ENCODE measurements at regions of chr2 and their contacts with region 1.

Region 1: GRCh38 chr2:67397143-67397986 is at the start of gene ETAA1:
- DNase-seq: peak; percentile 58 to 95
- H3K4me3 ChIP-seq: peak within 1 kb of the TSS; percentile 73 to 89
- H3K27ac ChIP-seq: peak within 1 kb of the TSS; percentile 90
- H3K4me1 ChIP-seq: peaks cover 0 to 28% of the 10 kb centered on the region in 2 donors
- H3K27me3 ChIP-seq: no peaks in the 10 kb centered on the region
- CTCF ChIP-seq: no peak
- total RNA-seq, gene ETAA1: 5.4 TPM

Region 2: DNA sequence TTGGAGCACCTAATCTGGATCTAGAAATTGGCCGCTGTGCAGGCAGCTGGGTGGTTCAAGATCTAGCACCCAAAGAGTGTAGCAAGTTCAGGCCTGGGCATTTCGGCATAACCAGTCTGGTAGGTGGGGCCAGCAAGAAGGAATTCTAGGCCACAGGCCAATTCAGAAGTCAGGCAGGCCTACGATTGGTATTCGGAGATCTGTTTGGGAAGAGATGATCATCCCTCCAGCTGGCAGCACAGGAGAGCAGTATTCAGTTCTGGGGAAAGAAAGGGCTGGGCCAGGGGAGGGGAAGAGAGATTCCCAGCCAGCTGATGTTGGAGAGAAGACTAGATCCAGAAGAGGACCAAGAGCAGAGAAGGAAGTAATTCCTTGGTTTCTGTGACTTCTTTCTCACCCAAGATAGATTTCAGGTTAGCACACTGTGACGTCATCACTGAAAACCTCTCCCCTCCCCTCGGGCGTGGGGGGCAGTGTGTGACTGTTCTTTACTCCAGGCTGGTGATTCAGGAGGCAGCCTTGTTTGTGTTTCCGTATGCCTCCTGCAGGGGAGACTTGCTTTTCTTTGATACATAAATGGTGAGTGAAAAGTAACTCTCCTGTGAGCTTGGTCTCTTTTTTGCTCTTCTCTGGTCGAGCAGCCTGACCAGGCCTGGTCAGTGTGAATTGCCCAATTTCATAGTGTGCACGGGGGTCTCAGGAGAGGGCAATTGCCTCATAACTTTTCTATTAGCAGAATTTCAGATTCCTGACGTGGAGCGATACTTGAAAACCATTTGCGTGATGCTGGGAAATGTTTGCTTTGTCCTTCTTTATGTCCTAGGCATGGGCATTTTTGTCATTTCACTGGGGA is 901.4 kb before region 1 on chr2:
- intact Hi-C with region 1: loop called (anchors 2 kb)
- DNase-seq: peak; percentile 21 to 89
- H3K4me3 ChIP-seq: peak overlapping the region; percentile 18 to 23
- H3K27ac ChIP-seq: peak overlapping the region; percentile 68 to 70
- H3K4me1 ChIP-seq: peaks cover 11 to 34% of the 10 kb centered on the region in 2 donors
- H3K27me3 ChIP-seq: no peaks in the 10 kb centered on the region
- CTCF ChIP-seq: peak; percentile 26 to 40 (median 27)

Region 3: DNA sequence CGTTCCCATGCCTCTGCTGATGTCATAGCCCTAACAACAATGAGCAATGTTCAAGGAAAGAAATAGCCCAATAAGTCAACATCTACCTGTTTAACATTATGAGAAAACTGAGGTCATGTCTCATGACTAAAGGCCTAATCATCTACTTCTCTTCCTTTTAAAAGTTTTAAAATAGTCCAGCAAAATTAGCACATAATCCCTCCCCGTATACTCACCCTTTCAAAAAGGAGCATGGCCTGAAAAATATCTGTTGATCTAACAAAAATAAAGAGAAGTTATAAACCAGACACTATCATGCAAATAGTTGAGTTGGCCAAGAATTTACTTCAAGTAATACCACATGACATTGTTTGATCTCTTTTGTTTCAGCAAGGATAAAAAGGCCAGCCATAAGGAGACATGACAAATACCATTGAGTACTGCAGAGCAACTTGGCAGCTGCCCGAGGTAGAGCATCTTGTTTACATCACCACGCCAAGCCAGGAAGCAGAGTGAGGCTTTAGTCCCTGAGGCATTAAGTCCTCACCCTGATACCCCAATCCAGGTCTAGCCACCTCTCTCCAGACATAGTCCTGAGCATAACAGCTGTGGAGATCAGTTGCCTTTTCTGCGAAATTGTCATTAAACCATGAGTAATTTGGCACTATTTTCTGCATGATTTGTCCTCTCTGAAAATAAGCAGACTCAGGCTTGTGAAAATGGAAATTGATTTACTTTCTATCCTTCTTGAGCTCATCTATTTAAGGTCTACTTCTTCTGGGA is 137.6 kb before region 1 on chr2:
- intact Hi-C with region 1: loop called (anchors 5 kb)
- DNase-seq: peak in 1 of 2 donors; percentile 64
- H3K4me3 ChIP-seq: no peak overlapping the region
- H3K27ac ChIP-seq: peak overlapping the region; percentile 83 to 90
- H3K4me1 ChIP-seq: peaks cover 0 to 12% of the 10 kb centered on the region in 2 donors
- H3K27me3 ChIP-seq: no peaks in the 10 kb centered on the region
- CTCF ChIP-seq: no peak

Region 4: DNA sequence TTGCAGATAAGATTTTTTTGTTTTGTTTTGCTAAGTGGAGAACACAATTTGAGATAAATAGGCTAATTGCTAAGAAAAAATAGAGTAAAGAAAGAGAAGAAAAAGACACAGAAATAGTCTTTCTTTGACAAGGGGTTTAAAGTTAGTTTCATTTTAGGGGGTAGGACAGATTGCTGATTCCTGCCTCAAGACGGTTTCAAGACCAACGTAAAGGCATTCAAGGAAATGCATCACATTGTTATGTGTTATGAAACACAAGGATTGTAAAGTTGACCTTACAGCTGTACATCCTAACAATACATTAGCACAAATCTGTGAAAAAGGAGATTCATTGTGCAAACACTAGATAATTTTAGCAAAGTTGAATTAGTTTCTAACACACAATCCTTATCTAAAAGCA is 22.9 kb before region 1 on chr2:
- intact Hi-C with region 1: loop called (anchors 2 kb)
- DNase-seq: no peak
- H3K4me3 ChIP-seq: peak overlapping the region; percentile 25 to 55
- H3K27ac ChIP-seq: peak overlapping the region in 1 of 2 donors; percentile 37
- H3K4me1 ChIP-seq: peaks cover 0 to 2% of the 10 kb centered on the region in 2 donors
- H3K27me3 ChIP-seq: no peaks in the 10 kb centered on the region
- CTCF ChIP-seq: no peak

Region 5: DNA sequence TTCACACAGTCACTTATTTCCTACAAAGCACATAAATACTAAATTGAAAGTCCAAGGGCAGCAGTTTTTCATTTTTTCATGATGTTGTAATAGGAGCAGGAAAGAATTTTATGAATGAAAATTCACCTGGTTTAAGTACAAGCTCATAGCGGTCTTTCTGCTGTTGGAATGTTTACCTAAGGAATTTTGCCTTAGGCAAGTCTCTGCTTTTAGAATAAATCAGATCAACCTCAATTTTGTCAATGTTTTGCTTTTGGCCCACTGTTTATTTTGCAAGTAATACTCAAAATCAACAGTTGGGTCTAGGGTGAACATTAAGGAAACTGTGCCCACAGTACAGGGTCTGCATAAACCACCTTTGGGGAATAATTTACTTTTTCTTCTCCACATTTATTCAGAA is 39.8 kb after region 1 on chr2:
- intact Hi-C with region 1: no loop called
- DNase-seq: no peak
- H3K4me3 ChIP-seq: no peak overlapping the region
- H3K27ac ChIP-seq: no peak overlapping the region
- H3K4me1 ChIP-seq: no peaks in the 10 kb centered on the region
- H3K27me3 ChIP-seq: no peaks in the 10 kb centered on the region
- CTCF ChIP-seq: no peak

Region 6: DNA sequence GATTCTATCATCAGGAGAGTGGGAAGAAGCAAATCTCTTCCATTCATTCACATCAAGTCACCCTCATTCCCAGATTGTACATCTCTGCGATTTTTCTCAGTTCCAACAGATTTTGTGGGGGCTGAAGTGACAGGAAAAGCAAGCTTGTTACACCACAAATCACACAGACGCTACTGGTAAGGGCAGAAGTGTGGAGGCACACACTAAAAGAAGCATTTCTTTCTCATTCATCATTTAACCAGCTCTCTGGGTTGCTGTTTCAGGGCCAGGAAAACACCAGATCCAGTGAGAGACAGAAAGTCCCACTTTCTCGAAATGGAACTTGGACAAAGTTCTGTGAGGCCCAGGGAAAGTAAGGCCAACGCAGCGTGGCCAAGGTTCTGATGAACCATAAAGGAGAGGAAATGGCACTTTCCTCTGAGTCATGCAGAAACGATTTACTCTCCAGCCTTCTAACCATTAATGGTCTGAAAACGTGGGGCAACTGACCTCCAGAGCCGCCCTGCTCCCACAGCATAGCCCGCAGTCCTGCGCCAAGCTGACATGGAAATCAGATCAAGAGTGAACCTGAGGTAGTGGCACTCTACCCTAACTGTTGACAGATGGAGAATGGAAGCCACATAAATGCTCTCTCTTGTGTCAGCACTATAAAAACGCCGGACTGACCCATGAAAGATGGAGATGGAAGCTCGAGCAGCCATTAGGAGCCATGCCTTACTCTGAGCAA is 474.5 kb after region 1 on chr2:
- intact Hi-C with region 1: loop called (anchors 10 kb)
- DNase-seq: peak; percentile 60 to 91
- H3K4me3 ChIP-seq: no peak overlapping the region
- H3K27ac ChIP-seq: peak overlapping the region; percentile 90 to 91
- H3K4me1 ChIP-seq: peaks cover 7 to 42% of the 10 kb centered on the region in 2 donors
- H3K27me3 ChIP-seq: no peaks in the 10 kb centered on the region
- CTCF ChIP-seq: no peak

Region 7: DNA sequence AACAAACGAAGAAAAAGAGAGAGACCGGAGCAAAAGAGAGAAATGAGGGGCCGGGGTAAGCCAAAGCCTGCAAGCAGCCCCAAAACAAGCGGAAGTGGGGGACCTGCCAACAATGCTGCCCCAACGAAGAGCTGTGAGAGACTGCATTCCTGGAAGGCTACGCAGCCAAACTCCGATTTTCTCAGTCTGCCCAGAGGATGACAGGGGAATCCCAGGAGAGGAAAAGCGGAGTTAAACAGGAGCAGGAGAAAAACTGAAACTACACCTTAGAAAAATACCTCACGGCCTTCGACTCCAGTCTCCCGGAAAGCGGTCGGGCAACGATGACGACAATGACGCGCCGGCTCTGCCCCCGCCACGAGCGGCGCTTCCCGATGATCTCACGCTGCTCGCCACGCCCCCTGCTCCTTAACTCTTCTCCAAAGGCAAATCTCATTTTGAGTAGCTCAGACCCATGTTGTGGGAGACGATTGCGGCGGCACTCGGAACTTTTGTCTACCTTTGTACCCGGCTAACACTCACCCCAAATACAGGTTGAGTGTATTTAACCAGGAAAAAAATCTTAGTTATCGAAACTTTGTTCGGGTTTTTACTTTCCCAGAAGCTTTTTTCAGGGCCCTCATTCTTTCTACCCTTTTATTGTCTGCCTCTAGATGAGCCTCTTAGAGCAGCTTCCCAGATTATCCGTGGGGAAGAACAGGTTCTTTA is 665.5 kb after region 1 on chr2 and contains the start of gene C1D:
- intact Hi-C with region 1: loop called (anchors 10 kb)
- DNase-seq: peak; percentile 62 to 97
- H3K4me3 ChIP-seq: peak within 1 kb of the TSS; percentile 64 to 80
- H3K27ac ChIP-seq: peak within 1 kb of the TSS; percentile 78 to 83
- H3K4me1 ChIP-seq: peaks cover 2 to 12% of the 10 kb centered on the region in 2 donors
- H3K27me3 ChIP-seq: no peaks in the 10 kb centered on the region
- CTCF ChIP-seq: no peak
- total RNA-seq, gene C1D: not detected

Measured in ascending aorta (tissue), 2 donors.